ENCODE measurements at regions of chr4 and their contacts with region 1.

Region 1: DNA sequence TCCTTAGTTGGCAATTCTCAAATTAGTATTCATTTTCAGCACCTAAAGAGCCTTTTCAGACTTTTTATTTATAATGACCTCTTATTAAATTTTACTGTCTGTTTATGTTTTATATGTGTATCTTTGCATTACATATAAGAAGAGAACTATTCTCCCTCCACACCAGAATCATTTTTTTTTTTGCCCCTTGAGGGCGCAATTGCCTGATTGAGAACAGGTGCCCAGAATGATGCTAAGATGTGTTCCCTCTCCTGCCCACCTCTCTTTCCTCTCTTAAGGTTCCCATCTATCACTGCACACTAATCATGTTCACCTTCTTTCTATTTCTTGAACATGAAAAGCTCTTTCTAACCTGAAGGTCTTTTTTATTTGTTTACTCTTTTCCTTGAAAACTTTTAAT is 44.2 kb upstream of the ADAM29 start:
- DNase-seq: peak; percentile 85
- H3K4me3 ChIP-seq: no peak overlapping the region
- H3K27ac ChIP-seq: peak overlapping the region; percentile 66
- H3K4me1 ChIP-seq: peaks cover 31% of the 10 kb centered on the region
- CTCF ChIP-seq: peak; percentile 88

Region 2: DNA sequence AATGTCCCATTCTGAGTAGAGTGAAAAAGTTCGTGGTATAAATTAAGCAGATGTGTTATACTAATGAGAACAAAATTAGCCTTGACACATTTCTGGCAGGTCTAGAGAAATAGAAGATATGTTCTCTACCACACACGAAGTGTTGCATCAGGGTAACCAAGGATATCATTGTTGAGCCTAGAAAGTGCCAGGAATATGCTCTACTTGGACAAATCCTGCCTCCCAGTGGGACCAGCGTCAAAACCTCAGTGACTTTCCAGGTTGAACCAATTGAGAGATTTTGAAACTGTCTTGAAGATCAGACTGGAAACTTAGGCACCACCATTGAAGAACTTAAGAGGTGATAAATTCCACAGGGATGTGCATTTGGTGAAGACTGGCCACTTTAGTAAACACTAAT is 467.5 kb before region 1 on chr4:
- CTCF ChIA-PET with region 1: no interaction called
- POLR2A ChIA-PET with region 1: no interaction called
- intact Hi-C with region 1: no loop called
- DNase-seq: no peak
- H3K4me3 ChIP-seq: no peak overlapping the region
- H3K27ac ChIP-seq: no peak overlapping the region
- H3K4me1 ChIP-seq: no peaks in the 10 kb centered on the region
- CTCF ChIP-seq: no peak

Region 3: DNA sequence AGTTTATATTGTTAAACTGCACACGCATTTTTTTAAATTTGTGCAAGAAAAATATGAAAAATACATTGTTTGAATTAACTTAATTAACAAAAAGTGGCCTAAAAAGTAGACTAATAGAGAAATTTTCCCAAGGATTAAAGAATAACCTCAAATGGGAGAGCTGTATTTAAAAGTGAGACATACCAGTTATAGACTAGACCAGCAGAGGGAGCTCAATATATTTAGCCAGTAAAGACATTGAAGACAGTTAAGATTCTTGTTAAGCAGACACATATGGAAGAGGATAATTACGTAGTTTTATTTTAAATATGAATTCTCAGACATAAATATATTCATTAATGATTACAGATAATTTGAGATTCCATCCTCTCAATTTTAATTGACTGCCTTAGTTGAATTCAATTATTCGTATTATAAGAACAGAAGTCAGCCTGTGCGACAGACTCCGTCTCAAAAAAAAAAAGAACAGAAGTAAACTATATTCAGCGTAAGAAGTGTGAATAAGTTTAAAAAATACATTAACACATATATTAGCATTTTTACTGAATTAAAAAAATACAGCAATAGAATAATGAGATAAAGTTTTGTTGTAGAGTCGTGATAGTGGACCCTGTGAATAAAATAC is 109.7 kb before region 1 on chr4:
- CTCF ChIA-PET with region 1: no interaction called
- POLR2A ChIA-PET with region 1: interaction called, 5 read pairs
- intact Hi-C with region 1: loop called (anchors 2 kb)
- DNase-seq: peak; percentile 79
- H3K4me3 ChIP-seq: no peak overlapping the region
- H3K27ac ChIP-seq: no peak overlapping the region
- H3K4me1 ChIP-seq: peaks cover 4% of the 10 kb centered on the region
- CTCF ChIP-seq: peak; percentile 97

Region 4: DNA sequence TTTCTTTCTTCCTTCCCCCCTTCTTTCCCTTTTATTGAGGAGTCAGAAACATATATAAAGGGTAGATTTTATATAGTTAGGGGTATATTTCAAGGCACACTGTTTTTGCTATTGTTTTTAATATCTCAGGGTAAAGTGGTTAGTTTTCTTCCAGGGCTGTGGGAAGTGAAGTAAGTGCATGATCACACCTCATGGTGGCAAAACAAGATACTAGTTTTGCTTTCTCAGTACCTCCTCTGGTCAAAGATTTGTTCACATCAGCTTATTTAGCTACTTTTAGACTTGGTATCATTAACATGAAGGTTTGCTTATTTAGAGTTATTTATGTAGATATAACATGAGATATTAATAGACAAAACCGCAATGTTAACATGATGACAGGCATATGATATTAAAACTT is 66.1 kb after region 1 on chr4:
- CTCF ChIA-PET with region 1: no interaction called
- POLR2A ChIA-PET with region 1: no interaction called
- intact Hi-C with region 1: no loop called
- DNase-seq: no peak
- H3K4me3 ChIP-seq: no peak overlapping the region
- H3K27ac ChIP-seq: no peak overlapping the region
- H3K4me1 ChIP-seq: no peaks in the 10 kb centered on the region
- CTCF ChIP-seq: no peak

Region 5: GRCh38 chr4:175066923-175067627 is 193.1 kb after region 1 on chr4:
- CTCF ChIA-PET with region 1: no interaction called
- POLR2A ChIA-PET with region 1: no interaction called
- intact Hi-C with region 1: loop called (anchors 10 kb)
- DNase-seq: peak; percentile 43
- H3K4me3 ChIP-seq: peak overlapping the region; percentile 1
- H3K27ac ChIP-seq: peak overlapping the region; percentile 56
- H3K4me1 ChIP-seq: peaks cover 22% of the 10 kb centered on the region
- CTCF ChIP-seq: no peak

Region 6: GRCh38 chr4:175253184-175253902 is 379.4 kb after region 1 on chr4:
- CTCF ChIA-PET with region 1: no interaction called
- POLR2A ChIA-PET with region 1: interaction called, 3 read pairs
- intact Hi-C with region 1: loop called (anchors 1 kb)
- DNase-seq: peak; percentile 54
- H3K4me3 ChIP-seq: no peak overlapping the region
- H3K27ac ChIP-seq: no peak overlapping the region
- H3K4me1 ChIP-seq: no peaks in the 10 kb centered on the region
- CTCF ChIP-seq: peak; percentile 77

Region 7: GRCh38 chr4:175351473-175351872 is 477.5 kb after region 1 on chr4:
- CTCF ChIA-PET with region 1: no interaction called
- POLR2A ChIA-PET with region 1: no interaction called
- intact Hi-C with region 1: loop called (anchors 10 kb)
- DNase-seq: peak; percentile 84
- H3K4me3 ChIP-seq: peak overlapping the region; percentile 37
- H3K27ac ChIP-seq: peak overlapping the region; percentile 73
- H3K4me1 ChIP-seq: peaks cover 25% of the 10 kb centered on the region
- CTCF ChIP-seq: no peak

Region 8: DNA sequence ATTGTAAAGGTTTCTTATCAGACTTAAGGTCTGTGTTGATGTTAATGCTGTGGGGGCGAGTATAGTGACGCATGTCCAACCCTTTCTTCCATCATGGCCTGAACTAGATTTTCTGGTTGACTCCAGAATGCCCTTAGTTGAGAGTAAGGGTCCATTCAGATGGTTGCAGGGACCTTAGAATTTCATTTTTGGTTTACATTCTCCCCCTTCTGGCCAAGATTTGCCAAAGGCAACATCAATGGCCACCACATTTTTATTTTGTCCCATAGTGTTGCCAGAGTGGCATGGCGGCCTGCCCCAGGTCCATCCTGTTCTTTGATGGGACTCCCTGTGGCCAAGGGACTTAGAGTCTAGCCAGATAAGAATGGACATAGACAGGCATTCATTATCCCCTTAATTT is 569.6 kb after region 1 on chr4:
- CTCF ChIA-PET with region 1: no interaction called
- POLR2A ChIA-PET with region 1: interaction called, 6 read pairs
- intact Hi-C with region 1: loop called (anchors 5 kb)
- DNase-seq: peak; percentile 39
- H3K4me3 ChIP-seq: no peak overlapping the region
- H3K27ac ChIP-seq: no peak overlapping the region
- H3K4me1 ChIP-seq: peaks cover 6% of the 10 kb centered on the region
- CTCF ChIP-seq: peak; percentile 56; the same call in 1 of the 2 replicates

Region 9: GRCh38 chr4:175536852-175537453 is 663.0 kb after region 1 on chr4:
- CTCF ChIA-PET with region 1: no interaction called
- POLR2A ChIA-PET with region 1: no interaction called
- intact Hi-C with region 1: loop called (anchors 1 kb)
- DNase-seq: peak; percentile 82
- H3K4me3 ChIP-seq: no peak overlapping the region
- H3K27ac ChIP-seq: no peak overlapping the region
- H3K4me1 ChIP-seq: peaks cover 4% of the 10 kb centered on the region
- CTCF ChIP-seq: peak; percentile 89

Measured in OCI-LY7 (cell line).